Right ventricle myocardium inferior (tissue), 1 donor: ENCODE measurements at regions of chrX and their contacts with region 1.

Region 1: GRCh38 chrX:96843566-96843965 is 40.1 kb upstream of the RPA4 start:
- DNase-seq: no peak
- ATAC-seq: no peak

Region 2: GRCh38 chrX:96770315-96770714 is 73.3 kb before region 1 on chrX:
- intact Hi-C with region 1: loop called (anchors 5 kb)
- DNase-seq: no peak
- ATAC-seq: no peak